Caco-2 (cell line): ENCODE measurements at regions of chr9 and their contacts with region 1.

Region 1: DNA sequence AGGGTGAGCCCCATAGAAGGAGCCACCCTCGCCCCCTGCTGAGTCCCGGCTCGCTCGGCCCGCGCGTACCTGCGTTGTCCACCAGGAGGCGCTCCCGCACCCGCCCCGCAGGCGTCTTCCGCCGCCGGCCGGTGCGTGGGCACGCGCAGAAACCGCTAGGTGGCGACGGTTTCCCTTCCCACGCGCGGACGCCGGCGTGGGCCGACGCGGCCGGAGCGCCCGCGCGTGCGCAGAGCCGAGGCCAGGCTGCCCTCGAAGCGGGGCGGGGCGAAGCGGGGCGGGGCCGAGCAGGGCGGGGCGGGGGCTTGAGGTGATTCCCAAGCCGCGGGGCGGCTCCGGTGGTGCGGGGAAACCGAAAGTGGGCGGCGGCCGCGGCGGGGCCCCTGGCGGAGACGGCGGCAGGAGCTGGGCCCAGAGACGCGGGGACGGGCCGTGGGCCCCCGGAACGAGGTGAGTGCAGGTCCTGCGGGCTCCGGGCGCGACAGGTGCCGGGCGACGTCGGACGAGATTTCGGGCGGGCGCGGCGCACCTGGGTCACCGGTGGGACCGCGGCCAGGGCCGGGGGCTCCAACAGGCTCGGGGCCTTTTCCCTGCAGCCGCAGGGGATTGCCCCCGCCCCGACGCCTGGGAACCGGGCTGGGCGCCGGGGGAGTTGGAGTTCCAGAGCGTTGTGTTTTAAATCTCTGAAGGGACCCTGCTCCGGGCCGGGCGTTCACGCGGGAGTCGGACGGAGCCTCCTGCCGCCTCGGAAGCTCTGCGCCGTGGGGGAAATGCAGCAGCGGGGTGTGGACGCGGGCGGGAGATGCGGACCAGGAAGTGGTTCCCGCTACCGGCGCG is at the start of gene TDRD7:
- DNase-seq: peak; percentile 86 to 90
- H3K4me3 ChIP-seq: peak within 1 kb of the TSS; percentile 75
- H3K4me3 Mint-ChIP-seq: peak within 1 kb of the TSS; percentile 77
- H3K27ac Mint-ChIP-seq: peak within 1 kb of the TSS; percentile 89
- H3K4me1 ChIP-seq: peaks cover 14% of the 10 kb centered on the region
- H3K4me1 Mint-ChIP-seq: peaks cover 37% of the 10 kb centered on the region
- H3K27me3 ChIP-seq: no peaks in the 10 kb centered on the region
- H3K27me3 Mint-ChIP-seq: no peaks in the 10 kb centered on the region
- CTCF ChIP-seq: peak; percentile 95 to 99
- total RNA-seq, gene TDRD7: 22.0 and 23.0 TPM in 2 replicates

Region 2: DNA sequence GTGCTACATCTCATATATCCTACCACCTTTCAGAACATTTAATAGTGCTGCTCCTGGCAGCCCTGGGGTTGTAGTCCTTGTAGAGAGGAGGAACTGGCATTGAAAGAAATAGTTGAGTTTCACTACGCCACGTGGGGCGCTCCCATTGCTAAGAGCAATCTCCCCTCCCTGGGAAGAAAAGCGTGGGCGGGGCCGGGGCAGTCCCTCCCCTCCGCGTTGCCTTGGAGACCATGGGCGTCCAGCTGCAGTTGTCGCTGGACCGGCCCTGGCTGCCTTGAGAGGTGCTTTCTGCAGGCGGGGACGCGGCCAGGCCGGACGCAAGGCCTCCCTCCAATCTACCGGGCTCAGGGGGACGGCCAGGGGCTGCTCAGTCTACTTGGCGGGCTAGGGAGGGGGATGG is 104.9 kb before region 1 on chr9:
- CTCF ChIA-PET with region 1: no interaction called
- POLR2A ChIA-PET with region 1: no interaction called
- intact Hi-C with region 1: no loop called
- DNase-seq: no peak
- H3K4me3 ChIP-seq: no peak overlapping the region
- H3K4me3 Mint-ChIP-seq: no peak overlapping the region
- H3K27ac Mint-ChIP-seq: no peak overlapping the region
- H3K4me1 ChIP-seq: peaks cover 7% of the 10 kb centered on the region; the same call in 1 of the 2 replicates
- H3K4me1 Mint-ChIP-seq: no peaks in the 10 kb centered on the region
- H3K27me3 ChIP-seq: no peaks in the 10 kb centered on the region
- H3K27me3 Mint-ChIP-seq: no peaks in the 10 kb centered on the region
- CTCF ChIP-seq: no peak

Region 3: DNA sequence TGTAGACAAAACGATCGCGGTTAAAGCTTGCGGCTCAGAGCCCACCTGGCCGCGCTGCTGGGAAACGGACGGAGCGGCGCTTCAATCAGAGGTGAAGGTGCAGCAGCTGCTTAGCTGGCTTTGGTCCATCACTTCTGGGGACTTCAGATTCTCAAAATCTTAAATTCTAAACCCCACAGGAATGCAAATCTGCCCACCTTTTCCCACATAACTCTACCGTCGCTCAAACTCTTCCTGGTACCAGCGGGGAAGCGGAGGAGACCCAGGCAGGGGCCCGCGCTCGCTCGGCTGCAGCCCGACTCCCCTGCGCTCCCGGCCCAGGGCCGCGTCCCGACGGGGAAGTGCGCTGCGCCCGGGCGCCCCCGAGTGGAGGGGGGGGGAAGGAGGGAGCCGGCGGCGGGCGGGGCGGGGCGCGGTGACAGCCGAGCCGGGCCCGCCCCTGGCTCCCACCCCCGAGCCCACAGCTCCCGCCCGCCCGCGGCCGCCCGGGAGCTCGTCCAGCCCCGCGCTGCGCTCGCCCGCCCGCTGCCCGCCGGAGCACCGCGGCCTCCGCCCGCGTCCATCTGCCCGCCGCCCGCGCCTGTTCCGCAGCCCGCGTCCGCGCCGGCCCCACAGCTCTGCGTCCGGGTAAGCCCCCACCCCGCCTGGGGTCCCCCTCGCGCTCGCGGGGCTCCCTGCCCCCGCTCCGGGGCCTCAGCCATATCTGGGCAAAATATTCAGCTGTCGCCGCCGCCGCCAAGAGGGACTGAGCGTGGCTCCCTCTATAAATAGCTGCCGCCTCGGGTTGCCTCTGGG is 89.4 kb after region 1 on chr9 and contains the start of gene TMOD1:
- CTCF ChIA-PET with region 1: interaction called, 3 read pairs
- POLR2A ChIA-PET with region 1: no interaction called
- intact Hi-C with region 1: loop called (anchors 5 kb)
- DNase-seq: peak; percentile 61 to 83
- H3K4me3 ChIP-seq: peak within 1 kb of the TSS; percentile 61
- H3K4me3 Mint-ChIP-seq: peak within 1 kb of the TSS; percentile 73
- H3K27ac Mint-ChIP-seq: no peak within 1 kb of the TSS
- H3K4me1 ChIP-seq: no peaks in the 10 kb centered on the region; the same call in 1 of the 2 replicates
- H3K4me1 Mint-ChIP-seq: no peaks in the 10 kb centered on the region
- H3K27me3 ChIP-seq: peaks cover 5% of the 10 kb centered on the region; the same call in 1 of the 2 replicates
- H3K27me3 Mint-ChIP-seq: peaks cover 19% of the 10 kb centered on the region
- CTCF ChIP-seq: peak in 1 of 2 experiments; percentile 30
- total RNA-seq, gene TMOD1: 1.00 and 1.1 TPM in 2 replicates

Region 4: GRCh38 chr9:97615439-97616072 is 203.5 kb after region 1 on chr9:
- CTCF ChIA-PET with region 1: no interaction called
- POLR2A ChIA-PET with region 1: no interaction called
- intact Hi-C with region 1: loop called (anchors 5 kb)
- DNase-seq: peak; percentile 57 to 68
- H3K4me3 ChIP-seq: no peak overlapping the region
- H3K4me3 Mint-ChIP-seq: no peak overlapping the region
- H3K27ac Mint-ChIP-seq: no peak overlapping the region
- H3K4me1 ChIP-seq: no peaks in the 10 kb centered on the region
- H3K4me1 Mint-ChIP-seq: no peaks in the 10 kb centered on the region
- H3K27me3 ChIP-seq: no peaks in the 10 kb centered on the region
- H3K27me3 Mint-ChIP-seq: no peaks in the 10 kb centered on the region
- CTCF ChIP-seq: peak; percentile 74 to 79